OCI-LY7 (cell line): ENCODE measurements at regions of chr21 and their contacts with region 1.

Region 1: DNA sequence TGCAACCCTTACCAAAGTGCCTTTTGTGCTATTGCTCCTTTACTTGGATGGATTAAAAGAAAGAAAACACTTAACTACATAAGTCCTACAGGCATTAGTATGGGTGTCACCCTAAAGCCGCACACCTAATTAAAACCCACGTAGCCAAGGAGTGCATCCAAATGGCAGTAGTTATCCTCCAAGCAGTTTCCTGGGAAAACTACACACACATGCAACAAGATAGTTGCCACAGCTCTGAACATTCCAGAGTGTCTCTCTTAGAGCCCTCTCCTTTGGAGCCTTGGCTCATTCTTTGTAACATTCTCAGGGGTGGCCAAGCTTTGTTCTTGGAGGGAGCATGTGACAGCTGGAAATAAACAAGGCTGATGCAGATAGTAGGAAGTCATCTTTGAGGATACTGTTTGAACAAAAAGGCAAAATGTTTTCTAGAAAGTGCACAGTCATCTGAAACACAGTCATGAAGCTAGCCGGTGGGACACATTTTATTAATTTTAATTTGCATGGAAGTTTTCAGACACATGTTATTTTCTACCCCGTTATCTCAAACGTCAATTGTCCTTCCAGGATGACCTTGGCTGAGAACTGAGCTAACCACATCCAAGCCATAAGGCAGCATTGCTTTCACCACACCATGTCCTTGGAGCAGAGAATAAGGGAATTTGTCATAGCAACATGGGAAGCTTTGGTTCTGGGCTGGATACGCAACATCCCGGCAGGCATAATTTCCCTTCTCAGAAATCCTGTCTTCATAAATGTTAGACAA is 51.4 kb downstream of the KCNJ15 start:
- DNase-seq: no peak
- H3K4me3 ChIP-seq: no peak overlapping the region
- H3K27ac ChIP-seq: no peak overlapping the region
- H3K4me1 ChIP-seq: no peaks in the 10 kb centered on the region
- CTCF ChIP-seq: no peak

Region 2: DNA sequence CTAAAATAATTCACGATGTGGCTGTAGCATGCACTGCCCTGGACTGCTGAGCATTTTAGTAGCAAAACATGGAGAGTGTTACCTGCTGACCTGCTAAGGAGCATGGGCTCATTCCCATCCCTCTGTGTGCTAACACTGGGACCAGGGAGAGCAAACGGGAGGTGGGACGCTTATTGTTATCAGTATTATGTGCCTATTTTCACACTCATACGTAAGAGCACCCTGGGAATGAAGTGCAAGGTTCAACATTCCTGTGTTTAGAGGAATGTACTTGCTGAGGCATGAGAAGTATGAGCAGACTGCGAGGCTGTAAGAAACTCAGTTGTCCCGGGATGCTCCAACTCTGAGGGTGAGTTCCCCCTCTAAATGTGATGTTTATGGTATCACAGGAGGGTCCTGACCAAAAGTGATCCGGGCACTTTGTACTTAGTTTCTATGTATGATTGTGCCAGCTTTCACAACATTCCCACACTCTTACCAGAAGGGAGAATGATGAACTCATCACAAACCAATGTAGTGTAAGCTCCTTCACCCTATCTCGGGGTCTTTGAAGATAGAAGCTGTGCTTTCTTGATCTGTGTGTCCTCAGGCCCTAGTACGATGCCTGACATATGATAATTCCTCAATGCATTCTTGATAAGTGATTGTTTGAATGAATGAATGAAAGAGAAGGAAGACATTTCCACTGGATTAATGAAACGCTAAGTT is 556.8 kb before region 1 on chr21:
- CTCF ChIA-PET with region 1: no interaction called
- POLR2A ChIA-PET with region 1: interaction called, 10 read pairs
- intact Hi-C with region 1: no loop called
- DNase-seq: no peak
- H3K4me3 ChIP-seq: no peak overlapping the region
- H3K27ac ChIP-seq: no peak overlapping the region
- H3K4me1 ChIP-seq: no peaks in the 10 kb centered on the region
- CTCF ChIP-seq: no peak